ENCODE measurements at regions of chr7 and their contacts with region 1.

Region 1: GRCh38 chr7:98106647-98107445 is at the start of gene LMTK2:
- DNase-seq: peak; percentile 97
- H3K4me3 Mint-ChIP-seq: peak within 1 kb of the TSS; percentile 97
- H3K27ac Mint-ChIP-seq: peak within 1 kb of the TSS; percentile 79
- H3K4me1 Mint-ChIP-seq: peaks cover 36% of the 10 kb centered on the region
- H3K27me3 Mint-ChIP-seq: peaks cover 7% of the 10 kb centered on the region
- total RNA-seq, gene LMTK2: 10.6 to 10.8 TPM

Region 2: GRCh38 chr7:97872025-97872669 is 234.7 kb before region 1 on chr7 and contains the start of gene ASNS:
- CTCF ChIA-PET with region 1: no interaction called
- POLR2A ChIA-PET with region 1: no interaction called
- intact Hi-C with region 1: loop called (anchors 2 kb)
- DNase-seq: peak; percentile 96
- H3K4me3 Mint-ChIP-seq: peak within 1 kb of the TSS; percentile 86
- H3K27ac Mint-ChIP-seq: peak within 1 kb of the TSS; percentile 91
- H3K4me1 Mint-ChIP-seq: peaks cover 19% of the 10 kb centered on the region
- H3K27me3 Mint-ChIP-seq: no peaks in the 10 kb centered on the region
- total RNA-seq, gene ASNS: 200 to 214 TPM

Region 3: DNA sequence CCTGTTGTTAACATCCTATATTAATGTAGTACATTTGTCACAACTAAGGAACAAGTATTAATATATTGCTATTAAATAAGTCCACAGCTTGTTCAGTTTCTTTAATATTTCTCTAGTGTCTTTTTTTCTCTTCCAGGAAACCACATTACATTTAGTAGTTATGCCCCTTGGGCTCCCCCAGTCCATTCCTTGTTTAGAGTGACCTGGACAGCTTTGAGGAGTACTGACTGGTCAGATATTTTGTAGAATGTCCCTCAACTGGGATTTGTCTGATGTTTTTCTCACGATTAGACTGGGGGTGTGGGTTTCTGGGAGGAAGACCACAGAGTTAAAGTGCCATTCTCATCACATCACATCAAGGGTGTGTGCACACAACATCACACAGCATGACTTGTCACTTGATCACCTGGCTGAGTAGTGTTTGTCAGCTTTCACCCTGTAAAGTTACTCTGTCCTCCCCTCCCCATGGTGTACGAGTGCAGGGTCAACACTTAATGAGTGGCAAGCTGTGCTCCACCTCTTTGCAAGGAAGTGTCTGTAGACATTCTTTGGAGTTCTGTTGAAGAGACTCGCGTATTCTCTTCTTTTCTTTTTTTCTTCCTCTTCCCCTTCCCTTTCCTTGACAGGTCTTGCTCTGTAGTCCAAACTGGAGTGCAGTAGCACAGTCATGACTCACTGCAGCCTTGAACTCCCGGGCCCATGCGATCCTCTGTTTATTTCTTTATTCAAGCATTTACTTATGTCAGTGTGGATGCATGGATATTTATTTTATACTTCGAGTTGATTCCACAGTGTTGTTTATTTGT is 10.0 kb after region 1 on chr7:
- CTCF ChIA-PET with region 1: interaction called, 10 read pairs
- POLR2A ChIA-PET with region 1: no interaction called
- intact Hi-C with region 1: no loop called
- DNase-seq: no peak
- H3K4me3 Mint-ChIP-seq: no peak overlapping the region
- H3K27ac Mint-ChIP-seq: no peak overlapping the region
- H3K4me1 Mint-ChIP-seq: peaks cover 21% of the 10 kb centered on the region
- H3K27me3 Mint-ChIP-seq: no peaks in the 10 kb centered on the region

Region 4: GRCh38 chr7:98168181-98168905 is 61.5 kb after region 1 on chr7:
- CTCF ChIA-PET with region 1: interaction called, 70 read pairs
- POLR2A ChIA-PET with region 1: interaction called, 6 read pairs
- intact Hi-C with region 1: loop called (anchors 1 kb)
- DNase-seq: peak; percentile 72
- H3K4me3 Mint-ChIP-seq: no peak overlapping the region
- H3K27ac Mint-ChIP-seq: no peak overlapping the region
- H3K4me1 Mint-ChIP-seq: peaks cover 6% of the 10 kb centered on the region
- H3K27me3 Mint-ChIP-seq: no peaks in the 10 kb centered on the region

Region 5: DNA sequence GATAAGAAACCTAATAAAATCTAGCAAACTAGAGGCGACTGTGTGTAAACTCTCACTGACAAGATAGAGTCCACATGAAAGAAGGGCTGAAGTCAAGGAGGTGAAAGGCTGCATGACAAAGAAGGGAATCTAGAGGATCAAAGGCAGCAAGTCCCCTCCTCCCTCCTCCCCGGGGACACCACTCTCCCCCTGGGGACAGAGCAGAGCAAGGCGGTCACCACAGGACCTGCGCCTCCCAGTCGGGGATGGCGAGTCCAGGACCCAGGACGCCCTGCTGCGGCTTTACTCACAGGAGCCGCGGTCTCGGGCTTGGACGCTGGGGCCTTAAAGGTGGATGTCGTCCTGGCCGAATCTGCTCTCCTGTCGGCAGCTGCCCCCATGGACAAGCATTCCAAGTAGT is 197.1 kb after region 1 on chr7:
- CTCF ChIA-PET with region 1: no interaction called
- POLR2A ChIA-PET with region 1: no interaction called
- intact Hi-C with region 1: no loop called
- DNase-seq: no peak
- H3K4me3 Mint-ChIP-seq: no peak overlapping the region
- H3K27ac Mint-ChIP-seq: no peak overlapping the region
- H3K4me1 Mint-ChIP-seq: no peaks in the 10 kb centered on the region
- H3K27me3 Mint-ChIP-seq: no peaks in the 10 kb centered on the region